H1 (cell line): ENCODE measurements at regions of chr2 and their contacts with region 1.

Region 1: DNA sequence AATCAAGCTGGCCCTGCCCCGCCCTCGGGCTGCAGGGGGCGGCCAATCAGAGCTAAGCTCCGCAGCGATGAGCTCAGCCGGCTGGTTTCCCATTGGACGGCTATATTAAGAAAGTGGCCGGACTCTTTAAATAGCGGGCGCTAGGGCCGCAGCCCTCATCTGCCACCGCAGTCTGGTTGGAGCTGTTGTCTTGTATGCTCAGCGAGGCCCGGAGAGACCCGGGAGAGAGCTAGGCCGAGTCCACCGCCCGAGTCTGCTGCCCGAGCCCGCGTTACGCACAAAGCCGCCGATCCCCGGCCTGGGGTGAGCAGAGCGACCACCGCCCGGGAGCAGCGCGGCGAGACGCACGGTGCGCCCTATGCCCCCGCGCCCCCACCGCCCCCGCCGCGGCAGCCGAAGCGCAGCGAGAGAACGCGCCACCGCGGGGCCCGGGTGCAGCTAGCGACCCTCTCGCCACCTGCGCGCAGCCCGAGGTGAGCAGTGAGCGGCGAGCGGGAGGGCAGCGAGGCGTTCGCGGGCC is at the start of gene RHOB:
- DNase-seq: peak; percentile 94 to 95
- H3K4me3 ChIP-seq: peak within 1 kb of the TSS; percentile 61 to 73 (median 66)
- H3K27ac ChIP-seq: no peak within 1 kb of the TSS; the same call in 1 of the 2 replicates
- H3K4me1 ChIP-seq: peaks cover 9 to 16% (median 13%) of the 10 kb centered on the region in 4 experiments
- H3K27me3 ChIP-seq: peaks cover 15 to 49% (median 37%) of the 10 kb centered on the region in 4 experiments
- CTCF ChIP-seq: no peak
- EP300 ChIP-seq: no peak
- POLR2A ChIP-seq: peak; percentile 96 to 99
- RAD21 ChIP-seq: 0 out of 4 replicates have a peak, but pooled peaks of 1 of the 2 experiments have one; percentile 2
- total RNA-seq, gene RHOB: 9.5 and 13.5 TPM in 2 replicates

Region 2: DNA sequence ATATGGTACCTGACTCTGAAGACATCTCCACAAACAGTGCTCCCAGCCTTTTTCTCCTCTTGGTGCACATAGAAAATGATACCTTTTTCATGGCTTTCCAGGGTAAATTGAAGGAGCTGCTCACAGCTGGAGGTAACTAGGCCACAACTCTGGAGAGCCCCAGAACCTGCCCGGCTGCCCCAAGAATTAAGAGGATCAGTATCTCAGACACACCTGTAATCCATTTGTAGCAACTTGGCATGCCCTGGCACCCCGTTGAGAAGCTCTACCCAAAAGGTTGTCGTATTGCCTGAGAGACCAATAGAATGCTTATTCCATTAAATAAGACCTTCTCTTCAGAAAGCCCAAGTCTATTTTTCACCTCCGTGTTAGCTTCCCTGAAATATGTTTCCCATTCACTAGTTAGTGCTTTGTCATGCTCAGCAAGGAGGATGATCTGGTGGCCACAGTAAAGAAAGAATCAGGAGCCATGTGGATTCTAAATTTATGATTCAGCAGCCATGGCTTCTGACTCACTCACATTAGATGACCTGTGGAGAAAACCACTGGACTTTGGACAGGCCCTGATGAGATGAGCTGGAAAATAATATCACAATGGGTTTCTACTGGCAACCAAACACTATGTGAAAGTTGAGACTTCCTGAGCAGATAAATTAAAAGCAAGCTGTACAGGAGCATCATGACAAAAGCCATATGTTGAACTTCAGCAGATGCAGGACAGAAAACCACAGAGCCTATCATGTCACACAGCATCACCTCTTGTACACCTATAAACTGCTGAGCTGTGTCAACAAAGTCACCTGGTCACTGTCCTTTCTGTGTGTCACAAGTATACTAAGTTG is 835.3 kb before region 1 on chr2:
- CTCF ChIA-PET with region 1: no interaction called
- POLR2A ChIA-PET with region 1: no interaction called
- DNase-seq: no peak
- H3K4me3 ChIP-seq: no peak overlapping the region
- H3K27ac ChIP-seq: no peak overlapping the region
- H3K4me1 ChIP-seq: no peaks in the 10 kb centered on the region
- H3K27me3 ChIP-seq: no peaks in the 10 kb centered on the region
- CTCF ChIP-seq: no peak
- EP300 ChIP-seq: no peak
- POLR2A ChIP-seq: no peak
- RAD21 ChIP-seq: no peak

Region 3: GRCh38 chr2:20157193-20157891 is 289.6 kb before region 1 on chr2:
- CTCF ChIA-PET with region 1: no interaction called
- POLR2A ChIA-PET with region 1: no interaction called
- DNase-seq: no peak
- H3K4me3 ChIP-seq: no peak overlapping the region
- H3K27ac ChIP-seq: no peak overlapping the region
- H3K4me1 ChIP-seq: no peaks in the 10 kb centered on the region
- H3K27me3 ChIP-seq: no peaks in the 10 kb centered on the region
- CTCF ChIP-seq: no peak
- EP300 ChIP-seq: no peak
- POLR2A ChIP-seq: no peak
- RAD21 ChIP-seq: no peak

Region 4: GRCh38 chr2:20411361-20411894 is 35.5 kb before region 1 on chr2:
- CTCF ChIA-PET with region 1: interaction called, 404 read pairs
- POLR2A ChIA-PET with region 1: interaction called, 14 read pairs
- DNase-seq: peak; percentile 56 to 90
- H3K4me3 ChIP-seq: no peak overlapping the region
- H3K27ac ChIP-seq: no peak overlapping the region
- H3K4me1 ChIP-seq: peaks cover 0 to 2% (median 0%) of the 10 kb centered on the region in 4 experiments; a peak in 1 of 7 replicates
- H3K27me3 ChIP-seq: no peaks in the 10 kb centered on the region
- CTCF ChIP-seq: peak; percentile 84 to 98 (median 89)
- EP300 ChIP-seq: no peak
- POLR2A ChIP-seq: no peak
- RAD21 ChIP-seq: peak; percentile 73 to 81

Region 5: DNA sequence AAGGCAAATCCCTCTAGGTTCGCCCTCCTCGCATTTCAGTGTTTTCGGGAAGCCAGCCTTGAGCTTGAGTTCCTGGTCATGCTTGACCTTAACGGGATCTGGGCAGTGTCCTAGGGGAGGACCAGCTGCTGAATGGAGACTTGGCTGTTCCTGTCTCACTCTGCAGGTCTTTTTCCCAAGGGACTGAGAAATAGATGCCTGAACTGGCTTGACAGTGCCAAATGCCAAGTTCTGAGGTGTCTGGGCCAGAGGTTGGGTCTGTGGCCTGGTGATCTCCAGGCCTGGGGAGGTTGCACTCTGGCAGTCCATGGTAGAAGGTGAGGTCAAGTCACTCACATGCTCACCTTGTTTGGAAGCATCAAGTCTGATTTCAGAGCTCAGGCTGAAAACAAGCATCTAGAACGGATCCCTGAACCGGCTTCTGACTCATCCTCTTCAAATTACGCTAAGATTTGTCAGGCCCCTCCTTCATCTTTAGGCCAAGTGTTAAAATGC is 19.5 kb after region 1 on chr2:
- CTCF ChIA-PET with region 1: interaction called, 5 read pairs
- POLR2A ChIA-PET with region 1: interaction called, 30 read pairs
- DNase-seq: no peak
- H3K4me3 ChIP-seq: no peak overlapping the region
- H3K27ac ChIP-seq: no peak overlapping the region
- H3K4me1 ChIP-seq: no peaks in the 10 kb centered on the region
- H3K27me3 ChIP-seq: peaks cover 0 to 2% (median 0%) of the 10 kb centered on the region in 4 experiments; a peak in 1 of 7 replicates
- CTCF ChIP-seq: no peak
- EP300 ChIP-seq: no peak
- POLR2A ChIP-seq: no peak
- RAD21 ChIP-seq: no peak

Region 6: GRCh38 chr2:20532634-20533437 is 85.9 kb after region 1 on chr2:
- CTCF ChIA-PET with region 1: interaction called, 5 read pairs
- POLR2A ChIA-PET with region 1: interaction called, 19 read pairs
- DNase-seq: no peak
- H3K4me3 ChIP-seq: no peak overlapping the region
- H3K27ac ChIP-seq: no peak overlapping the region
- H3K4me1 ChIP-seq: peaks cover 5 to 18% (median 12%) of the 10 kb centered on the region in 4 experiments
- H3K27me3 ChIP-seq: no peaks in the 10 kb centered on the region
- CTCF ChIP-seq: no peak
- EP300 ChIP-seq: no peak
- POLR2A ChIP-seq: no peak
- RAD21 ChIP-seq: peak in 1 of 2 experiments; percentile 12; a peak in 1 of 4 replicates

Region 7: GRCh38 chr2:20584637-20585321 is 137.8 kb after region 1 on chr2:
- CTCF ChIA-PET with region 1: interaction called, 5 read pairs
- POLR2A ChIA-PET with region 1: interaction called, 23 read pairs
- DNase-seq: peak; percentile 67 to 79
- H3K4me3 ChIP-seq: peak overlapping the region in 1 of 4 experiments; percentile 27; a peak in 2 of 8 replicates
- H3K27ac ChIP-seq: peak overlapping the region; percentile 12; the same call in 1 of the 2 replicates
- H3K4me1 ChIP-seq: peaks cover 7 to 16% (median 11%) of the 10 kb centered on the region in 4 experiments
- H3K27me3 ChIP-seq: no peaks in the 10 kb centered on the region
- CTCF ChIP-seq: no peak
- EP300 ChIP-seq: no peak
- POLR2A ChIP-seq: peak in 1 of 2 experiments; percentile 56; a peak in 1 of 3 replicates
- RAD21 ChIP-seq: no peak

Region 8: GRCh38 chr2:20625491-20626391 is 178.8 kb after region 1 on chr2:
- CTCF ChIA-PET with region 1: interaction called, 367 read pairs
- POLR2A ChIA-PET with region 1: interaction called, 13 read pairs
- DNase-seq: no peak
- H3K4me3 ChIP-seq: no peak overlapping the region
- H3K27ac ChIP-seq: no peak overlapping the region
- H3K4me1 ChIP-seq: no peaks in the 10 kb centered on the region
- H3K27me3 ChIP-seq: no peaks in the 10 kb centered on the region
- CTCF ChIP-seq: no peak
- EP300 ChIP-seq: no peak
- POLR2A ChIP-seq: no peak
- RAD21 ChIP-seq: no peak

Region 9: GRCh38 chr2:20650880-20651730 is 204.1 kb after region 1 on chr2 and contains the start of gene HS1BP3:
- CTCF ChIA-PET with region 1: interaction called, 28 read pairs
- POLR2A ChIA-PET with region 1: interaction called, 19 read pairs
- DNase-seq: peak in 1 of 2 experiments; percentile 91
- H3K4me3 ChIP-seq: peak within 1 kb of the TSS; percentile 47 to 68 (median 56)
- H3K27ac ChIP-seq: no peak within 1 kb of the TSS
- H3K4me1 ChIP-seq: peaks cover 0 to 11% (median 7%) of the 10 kb centered on the region in 4 experiments; a peak in 5 of 7 replicates
- H3K27me3 ChIP-seq: peaks cover 0 to 4% (median under 1%) of the 10 kb centered on the region in 4 experiments; a peak in 4 of 7 replicates
- CTCF ChIP-seq: peak in 2 of 3 experiments; percentile 87 to 92; a peak in 3 of 4 replicates
- EP300 ChIP-seq: peak in 1 of 2 experiments; percentile 60; a peak in 1 of 3 replicates
- POLR2A ChIP-seq: peak in 1 of 2 experiments; percentile 74; a peak in 2 of 3 replicates
- RAD21 ChIP-seq: peak; percentile 49 to 76
- total RNA-seq, gene HS1BP3: 11.1 and 11.2 TPM in 2 replicates